Heart right ventricle (tissue), 16 donors: ENCODE measurements at regions of chr3 and their contacts with region 1.

Region 1: DNA sequence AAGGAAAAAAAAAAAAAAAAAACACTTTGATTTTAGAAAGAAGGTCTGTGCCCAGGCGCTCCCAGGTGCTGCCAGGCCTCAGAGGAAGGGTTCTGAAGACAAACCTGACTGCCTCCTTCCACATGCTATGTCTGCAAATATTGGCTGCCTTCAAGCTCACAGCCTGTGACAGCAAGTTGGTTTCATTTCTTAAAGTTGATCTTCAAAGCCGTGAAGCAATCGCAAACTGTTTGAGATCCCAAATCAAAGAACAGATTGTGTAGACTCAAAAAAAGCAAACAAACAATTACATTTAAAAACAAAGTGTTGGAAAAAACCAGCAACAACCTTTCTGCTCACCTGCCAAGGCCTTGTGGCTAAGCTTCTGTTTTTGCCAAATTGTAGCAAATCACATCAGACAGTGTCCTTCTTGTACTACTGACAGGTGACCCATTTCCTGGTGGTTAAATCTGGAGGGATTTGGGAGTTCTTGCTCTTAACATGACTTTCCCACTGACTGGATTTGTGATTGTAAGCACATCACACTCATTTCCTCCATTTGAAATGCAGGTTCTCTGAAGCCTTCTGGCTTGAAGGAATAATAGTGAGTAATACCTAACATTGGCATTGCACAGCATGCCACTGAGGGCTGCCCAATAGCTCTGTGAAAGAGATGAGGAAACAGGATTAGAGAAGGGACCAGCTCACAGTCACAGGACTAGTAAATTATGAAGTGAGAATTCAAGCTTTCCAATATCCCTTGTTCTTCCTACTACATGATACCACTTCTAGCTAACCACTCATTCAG is 502.4 kb downstream of the LPP start:
- DNase-seq: no peak
- ATAC-seq: peak in 1 of 8 donors; percentile 58
- H3K4me3 ChIP-seq: no peak overlapping the region
- H3K27ac ChIP-seq: no peak overlapping the region
- H3K4me1 ChIP-seq: peaks cover 0 to 27% (median 12%) of the 10 kb centered on the region in 9 donors
- H3K27me3 ChIP-seq: no peaks in the 10 kb centered on the region
- CTCF ChIP-seq: no peak

Region 2: GRCh38 chr3:188531210-188531609 is 125.2 kb before region 1 on chr3:
- intact Hi-C with region 1: loop called in 1 of 10 experiments (anchors 10 kb)
- DNase-seq: no peak
- ATAC-seq: no peak
- H3K4me3 ChIP-seq: no peak overlapping the region
- H3K27ac ChIP-seq: no peak overlapping the region
- H3K4me1 ChIP-seq: peaks cover 0 to 24% (median 7%) of the 10 kb centered on the region in 9 donors
- H3K27me3 ChIP-seq: no peaks in the 10 kb centered on the region
- CTCF ChIP-seq: no peak